Activated CD4-positive, alpha-beta memory T cell treated with anti-CD3 and anti-CD28 coated beads, Interleukin-2, amount 10 ng/mL, durations not matched to agents 7 days and 5 days (primary cell): ENCODE measurements at regions of chr15 and their contacts with region 1.

Region 1: DNA sequence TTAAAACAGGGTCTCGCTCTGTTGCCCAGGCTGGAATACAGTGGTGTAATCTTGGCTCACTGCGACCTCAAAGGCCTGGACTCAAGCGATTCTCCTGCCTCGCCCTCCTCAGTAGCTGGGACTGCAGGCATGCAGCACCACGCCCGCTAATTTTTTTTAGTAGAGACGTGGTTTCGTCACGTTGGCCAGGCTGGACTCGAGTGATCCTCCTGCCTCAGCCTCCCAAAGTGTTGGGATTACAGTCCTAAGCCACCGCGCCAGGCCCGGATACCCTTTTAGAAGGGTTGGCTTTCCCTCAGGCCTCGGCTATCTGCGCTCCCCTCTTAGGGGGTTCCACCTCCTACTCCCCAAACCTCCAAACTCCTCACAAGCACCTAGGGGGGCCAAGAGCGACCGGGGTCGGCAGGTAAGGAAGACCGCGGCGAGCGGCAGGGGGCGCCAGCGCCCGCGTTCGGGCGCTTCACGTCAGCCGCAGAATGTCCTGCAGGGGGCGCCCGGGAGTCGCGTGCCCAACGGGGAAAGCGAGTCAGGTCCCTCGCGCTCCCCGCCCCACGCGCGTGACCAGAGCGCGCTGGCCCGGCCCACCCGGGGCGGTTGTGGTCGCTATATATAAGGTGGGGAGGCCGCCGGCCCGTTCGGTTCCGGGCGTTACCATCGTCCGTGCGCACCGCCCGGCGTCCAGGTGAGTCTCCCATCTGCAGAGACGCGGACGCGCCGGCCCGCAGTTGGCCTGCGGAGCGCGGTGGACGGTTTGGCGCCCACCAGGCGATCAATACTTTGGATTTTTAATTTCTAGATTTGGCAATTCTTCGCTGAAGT is 51.8 kb upstream of the GATM start:
- DNase-seq: peak; percentile 86
- H3K4me3 Mint-ChIP-seq: peak overlapping the region; percentile 41
- H3K27ac Mint-ChIP-seq: no peak overlapping the region
- H3K4me1 Mint-ChIP-seq: peaks cover 7% of the 10 kb centered on the region
- H3K27me3 Mint-ChIP-seq: peaks cover 31% of the 10 kb centered on the region

Region 2: DNA sequence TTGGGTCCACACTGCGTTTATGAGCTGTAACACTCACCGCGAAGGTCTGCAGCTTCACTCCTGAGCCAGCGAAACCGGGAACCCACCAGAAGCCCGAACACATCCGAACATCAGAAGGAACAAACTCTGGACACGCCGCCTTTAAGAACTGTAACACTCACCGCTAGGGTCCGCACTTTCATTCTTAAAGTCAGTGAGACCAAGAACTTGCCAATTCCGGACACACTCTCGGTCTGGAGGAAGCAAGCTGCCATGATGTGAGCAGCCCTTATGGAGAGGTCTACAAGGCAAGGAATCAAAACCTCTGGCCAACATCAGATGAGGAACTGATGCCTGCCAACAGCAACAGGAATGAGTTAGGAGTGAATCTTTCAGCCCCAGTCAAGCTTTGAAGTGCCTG is 115.2 kb before region 1 on chr15:
- CTCF ChIA-PET with region 1: no interaction called
- POLR2A ChIA-PET with region 1: no interaction called
- DNase-seq: no peak
- H3K4me3 Mint-ChIP-seq: no peak overlapping the region
- H3K27ac Mint-ChIP-seq: no peak overlapping the region
- H3K4me1 Mint-ChIP-seq: no peaks in the 10 kb centered on the region
- H3K27me3 Mint-ChIP-seq: peaks cover 15% of the 10 kb centered on the region

Region 3: GRCh38 chr15:45414215-45414885 is 15.8 kb before region 1 on chr15:
- CTCF ChIA-PET with region 1: interaction called, 10 read pairs
- POLR2A ChIA-PET with region 1: no interaction called
- DNase-seq: no peak
- H3K4me3 Mint-ChIP-seq: no peak overlapping the region
- H3K27ac Mint-ChIP-seq: peak overlapping the region; percentile 37
- H3K4me1 Mint-ChIP-seq: peaks cover 20% of the 10 kb centered on the region
- H3K27me3 Mint-ChIP-seq: no peaks in the 10 kb centered on the region

Region 4: GRCh38 chr15:45449916-45450867 is 20.0 kb after region 1 on chr15:
- CTCF ChIA-PET with region 1: interaction called, 13 read pairs
- POLR2A ChIA-PET with region 1: interaction called, 5 read pairs
- DNase-seq: no peak
- H3K4me3 Mint-ChIP-seq: no peak overlapping the region
- H3K27ac Mint-ChIP-seq: no peak overlapping the region
- H3K4me1 Mint-ChIP-seq: peaks cover 16% of the 10 kb centered on the region
- H3K27me3 Mint-ChIP-seq: peaks cover 11% of the 10 kb centered on the region

Region 5: DNA sequence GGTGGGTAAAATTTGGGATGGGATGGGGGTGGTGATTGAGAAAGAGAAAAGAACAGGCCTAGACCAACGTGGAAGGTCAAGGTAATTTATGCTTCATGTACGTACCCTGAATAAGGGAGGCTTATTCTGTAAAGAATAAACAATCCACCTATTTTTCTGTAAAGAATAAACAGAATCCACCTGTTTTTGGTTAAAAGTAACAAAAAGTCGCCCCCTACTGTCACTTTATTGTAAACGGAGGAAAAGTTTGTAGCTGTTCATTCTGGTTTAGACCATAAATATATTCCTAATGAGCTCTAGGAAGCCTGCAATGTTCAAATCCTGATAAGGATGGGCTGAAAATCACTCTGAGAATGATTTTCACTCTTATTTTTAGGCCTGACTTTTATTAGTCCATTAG is 181.1 kb after region 1 on chr15:
- CTCF ChIA-PET with region 1: interaction called, 19 read pairs
- POLR2A ChIA-PET with region 1: no interaction called
- DNase-seq: no peak
- H3K4me3 Mint-ChIP-seq: no peak overlapping the region
- H3K27ac Mint-ChIP-seq: no peak overlapping the region
- H3K4me1 Mint-ChIP-seq: peaks cover 19% of the 10 kb centered on the region
- H3K27me3 Mint-ChIP-seq: no peaks in the 10 kb centered on the region